CD4-positive, alpha-beta T cell (primary cell): ENCODE measurements at regions of chr11 and their contacts with region 1.

Region 1: DNA sequence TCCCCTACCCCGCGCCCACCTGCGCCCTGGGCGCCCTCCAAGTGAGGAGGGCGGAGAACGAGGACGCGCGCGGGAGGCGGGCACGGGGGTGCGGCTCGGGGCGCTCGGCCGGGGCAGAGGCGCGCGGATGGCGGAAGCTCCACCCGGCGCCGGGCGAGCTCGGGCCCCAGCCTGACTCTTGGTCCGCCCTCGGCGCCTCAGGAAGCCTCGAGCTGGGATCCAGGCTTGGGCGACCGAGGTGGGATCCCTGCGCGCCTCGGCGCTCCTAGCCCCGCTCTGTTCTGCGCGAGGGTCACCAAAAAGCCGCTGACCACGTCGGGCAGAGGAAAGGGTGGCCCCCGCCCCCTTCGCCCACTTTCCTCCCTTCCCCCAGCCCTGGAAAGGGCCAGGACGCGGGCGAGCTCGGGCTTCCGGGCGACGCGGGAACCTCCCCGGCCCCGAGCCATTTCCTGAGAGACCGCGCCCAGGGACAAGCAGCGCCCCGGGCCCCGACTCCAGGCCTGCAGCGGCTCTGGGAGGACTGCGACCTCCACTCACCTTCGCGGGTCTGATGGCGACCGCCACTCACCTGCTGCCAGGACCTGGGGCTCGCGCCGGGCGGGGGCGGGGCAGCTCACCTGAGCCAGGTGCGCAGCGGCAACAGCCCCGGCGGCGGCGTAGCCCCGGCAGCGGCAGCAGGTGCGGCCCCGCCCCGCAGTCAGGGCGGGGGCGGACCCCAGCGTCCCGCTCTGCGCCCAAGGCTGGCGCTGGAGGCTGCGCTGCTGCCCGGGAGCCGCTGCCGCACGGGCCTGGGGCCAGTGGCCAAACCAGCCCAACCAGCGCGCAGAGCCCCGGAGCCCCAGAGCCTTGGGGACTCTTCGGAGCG is 2.2 kb upstream of the SIGIRR start:
- DNase-seq: peak in 10 of 14 experiments; percentile 19 to 71 (median 48)
- ATAC-seq: peak; percentile 13
- H3K4me3 ChIP-seq: peak overlapping the region; percentile 96
- H3K4me3 Mint-ChIP-seq: peak overlapping the region; percentile 90
- H3K27ac ChIP-seq: peak overlapping the region; percentile 48 to 75
- H3K27ac Mint-ChIP-seq: peak overlapping the region; percentile 78
- H3K4me1 ChIP-seq: peaks cover 48% of the 10 kb centered on the region
- H3K4me1 Mint-ChIP-seq: peaks cover 34% of the 10 kb centered on the region
- H3K27me3 ChIP-seq: no peaks in the 10 kb centered on the region
- H3K27me3 Mint-ChIP-seq: no peaks in the 10 kb centered on the region
- CTCF ChIP-seq: no peak

Region 2: DNA sequence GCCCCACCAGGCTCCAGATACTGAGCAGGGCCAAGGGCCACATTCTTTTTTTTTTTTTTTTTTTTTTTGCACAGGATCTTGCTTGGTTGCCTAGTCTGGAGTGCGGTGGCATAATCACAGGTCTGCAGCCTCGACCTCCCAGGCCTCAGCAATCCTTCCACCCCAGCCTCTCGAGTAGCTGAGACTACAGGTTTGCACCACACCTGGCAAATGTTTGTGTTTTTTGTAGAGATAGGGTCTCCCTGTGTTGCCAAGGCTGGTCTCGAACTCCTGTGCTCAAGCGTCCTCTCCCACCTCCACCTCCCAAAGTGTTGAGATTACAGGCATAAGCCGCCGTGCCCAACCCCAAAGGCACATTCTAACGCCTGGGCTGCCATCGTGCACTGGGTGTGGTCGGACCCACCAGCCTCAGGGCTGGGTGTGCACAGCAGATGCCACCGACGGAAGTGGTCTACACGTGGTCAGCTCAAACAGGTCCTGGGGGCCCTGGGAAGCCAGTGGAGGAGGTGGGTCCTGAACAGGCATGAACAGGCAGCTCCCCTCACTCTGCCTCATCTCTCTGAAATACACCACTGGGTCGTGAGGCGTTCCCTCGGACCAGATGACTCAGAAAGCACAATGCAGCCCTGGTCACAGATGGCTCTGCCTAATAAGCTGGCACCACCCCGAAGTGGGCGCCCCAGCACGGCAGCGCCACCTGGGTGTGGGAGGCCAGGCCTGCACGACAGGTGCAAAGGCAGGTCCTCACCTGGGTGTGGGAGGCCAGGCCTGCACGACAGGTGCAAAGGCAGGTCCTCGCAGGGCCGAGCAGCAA is 52.8 kb before region 1 on chr11:
- CTCF ChIA-PET with region 1: no interaction called
- POLR2A ChIA-PET with region 1: interaction called, 3 read pairs
- intact Hi-C with region 1: loop called in 1 of 2 experiments (anchors 10 kb)
- DNase-seq: peak; percentile 46 to 80 (median 64)
- ATAC-seq: peak; percentile 80
- H3K4me3 ChIP-seq: no peak overlapping the region
- H3K4me3 Mint-ChIP-seq: no peak overlapping the region
- H3K27ac ChIP-seq: no peak overlapping the region
- H3K27ac Mint-ChIP-seq: no peak overlapping the region
- H3K4me1 ChIP-seq: peaks cover 19% of the 10 kb centered on the region
- H3K4me1 Mint-ChIP-seq: peaks cover 24% of the 10 kb centered on the region
- H3K27me3 ChIP-seq: peaks cover 17 to 25% of the 10 kb centered on the region in 2 experiments
- H3K27me3 Mint-ChIP-seq: peaks cover 35% of the 10 kb centered on the region
- CTCF ChIP-seq: peak; percentile 37

Region 3: GRCh38 chr11:441418-442274 is 24.7 kb after region 1 on chr11 and contains the start of gene ANO9:
- CTCF ChIA-PET with region 1: no interaction called
- POLR2A ChIA-PET with region 1: interaction called, 13 read pairs
- intact Hi-C with region 1: loop called in 1 of 2 experiments (anchors 2 kb)
- DNase-seq: peak; percentile 38 to 86 (median 58)
- ATAC-seq: peak; percentile 97
- H3K4me3 ChIP-seq: peak within 1 kb of the TSS; percentile 62
- H3K4me3 Mint-ChIP-seq: peak within 1 kb of the TSS; percentile 77
- H3K27ac ChIP-seq: peak within 1 kb of the TSS in 1 of 2 donors; percentile 41
- H3K27ac Mint-ChIP-seq: no peak within 1 kb of the TSS
- H3K4me1 ChIP-seq: peaks cover 56% of the 10 kb centered on the region
- H3K4me1 Mint-ChIP-seq: peaks cover 16% of the 10 kb centered on the region
- H3K27me3 ChIP-seq: no peaks in the 10 kb centered on the region
- H3K27me3 Mint-ChIP-seq: no peaks in the 10 kb centered on the region
- CTCF ChIP-seq: no peak
- total RNA-seq, gene ANO9: 109 to 114 TPM

Region 4: DNA sequence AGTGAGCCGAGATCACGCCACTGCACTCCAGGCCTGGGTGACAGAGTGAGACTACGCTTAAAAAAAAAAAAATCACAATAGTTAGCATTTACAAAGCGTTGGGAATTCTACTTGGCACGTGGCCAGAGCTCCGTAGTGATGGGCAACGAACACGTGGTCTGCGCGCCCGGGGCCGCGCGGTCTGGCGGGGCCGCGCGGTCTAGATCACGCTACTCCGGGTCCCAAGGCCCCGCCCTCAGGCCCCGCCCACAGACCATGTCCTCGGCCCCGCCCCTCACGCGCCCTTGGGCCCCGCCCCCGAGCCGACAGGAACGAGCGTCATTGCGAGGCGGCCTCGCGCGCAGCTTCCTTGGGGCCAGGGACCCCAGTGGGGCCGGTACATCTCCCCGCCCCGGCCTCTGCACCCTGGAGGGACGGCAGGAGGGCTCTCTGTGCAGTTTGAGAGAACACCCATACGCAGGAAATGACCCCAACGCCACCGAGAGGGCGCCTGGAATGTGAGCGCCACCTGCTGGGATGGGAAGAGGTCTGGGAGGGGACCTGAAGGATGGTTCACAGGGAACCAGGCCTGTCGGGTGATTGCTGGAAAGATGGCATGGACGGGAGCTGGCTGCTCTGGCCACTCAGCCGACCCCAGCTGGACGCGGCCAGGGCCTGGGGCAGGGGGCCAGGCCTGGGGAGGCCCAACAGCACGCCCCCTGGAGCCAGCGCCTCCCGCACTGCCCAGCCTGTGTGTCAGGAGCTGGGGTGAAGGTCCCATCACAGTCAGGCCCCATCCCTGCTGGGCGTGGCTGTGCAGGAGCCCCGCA is 31.1 kb after region 1 on chr11:
- CTCF ChIA-PET with region 1: interaction called, 16 read pairs
- POLR2A ChIA-PET with region 1: interaction called, 63 read pairs
- intact Hi-C with region 1: loop called (anchors 1 kb)
- DNase-seq: peak; percentile 91 to 98 (median 94)
- ATAC-seq: peak; percentile 66
- H3K4me3 ChIP-seq: peak overlapping the region; percentile 63
- H3K4me3 Mint-ChIP-seq: peak overlapping the region; percentile 93
- H3K27ac ChIP-seq: peak overlapping the region; percentile 84 to 89
- H3K27ac Mint-ChIP-seq: peak overlapping the region; percentile 95
- H3K4me1 ChIP-seq: peaks cover 38% of the 10 kb centered on the region
- H3K4me1 Mint-ChIP-seq: peaks cover 26% of the 10 kb centered on the region
- H3K27me3 ChIP-seq: no peaks in the 10 kb centered on the region
- H3K27me3 Mint-ChIP-seq: no peaks in the 10 kb centered on the region
- CTCF ChIP-seq: peak; percentile 93

Region 5: GRCh38 chr11:1959786-1960185 is 1542.8 kb after region 1 on chr11:
- CTCF ChIA-PET with region 1: no interaction called
- POLR2A ChIA-PET with region 1: no interaction called
- intact Hi-C with region 1: no loop called
- DNase-seq: no peak
- ATAC-seq: no peak
- H3K4me3 ChIP-seq: no peak overlapping the region
- H3K4me3 Mint-ChIP-seq: no peak overlapping the region
- H3K27ac ChIP-seq: no peak overlapping the region
- H3K27ac Mint-ChIP-seq: no peak overlapping the region
- H3K4me1 ChIP-seq: no peaks in the 10 kb centered on the region
- H3K4me1 Mint-ChIP-seq: no peaks in the 10 kb centered on the region
- H3K27me3 ChIP-seq: no peaks in the 10 kb centered on the region
- H3K27me3 Mint-ChIP-seq: no peaks in the 10 kb centered on the region
- CTCF ChIP-seq: no peak